Activated naive CD4-positive, alpha-beta T cell treated with anti-CD3 and anti-CD28 coated beads for 36 hours (primary cell): ENCODE measurements at regions of chr17 and their contacts with region 1.

Region 1: GRCh38 chr17:80254396-80255251 is 6.0 kb upstream of the RNF213 start:
- DNase-seq: peak; percentile 90
- H3K4me3 Mint-ChIP-seq: peak overlapping the region; percentile 34
- H3K27ac Mint-ChIP-seq: peak overlapping the region; percentile 92
- H3K4me1 Mint-ChIP-seq: peaks cover 63% of the 10 kb centered on the region
- H3K27me3 Mint-ChIP-seq: no peaks in the 10 kb centered on the region

Region 2: DNA sequence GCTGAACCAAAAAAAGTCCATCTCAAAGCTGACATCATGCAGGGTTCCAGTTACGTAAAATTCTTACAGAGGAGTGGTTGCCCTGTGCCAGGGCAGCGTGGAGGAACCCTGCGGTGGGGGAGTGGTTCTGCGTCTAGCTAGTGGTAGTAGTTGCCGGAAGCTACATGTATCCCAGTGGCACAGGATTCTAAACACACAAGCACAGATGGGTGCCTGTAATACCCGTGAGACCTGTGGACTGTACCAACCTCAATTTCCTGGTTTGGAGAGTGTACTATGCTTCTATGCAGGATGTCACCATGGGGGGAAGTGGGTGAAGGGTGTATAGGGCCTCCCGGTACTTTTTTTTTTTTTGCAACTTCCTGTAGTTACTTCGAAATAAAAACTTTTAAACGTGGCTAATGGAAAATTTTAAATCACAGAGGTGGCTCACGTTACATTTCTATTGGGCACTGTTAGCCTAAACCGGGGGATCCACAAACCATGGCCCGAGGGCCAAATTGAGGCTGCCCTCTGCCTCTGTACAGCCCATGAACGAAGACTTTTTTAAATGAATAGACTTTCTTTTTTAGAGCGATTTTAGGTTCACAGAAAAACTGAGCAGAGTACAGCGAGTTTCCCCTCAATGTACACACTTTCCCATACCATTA is 257.5 kb before region 1 on chr17:
- CTCF ChIA-PET with region 1: no interaction called
- intact Hi-C with region 1: loop called (anchors 2 kb)
- DNase-seq: peak; percentile 92
- H3K4me3 Mint-ChIP-seq: peak overlapping the region; percentile 68
- H3K27ac Mint-ChIP-seq: peak overlapping the region; percentile 97
- H3K4me1 Mint-ChIP-seq: peaks cover 59% of the 10 kb centered on the region
- H3K27me3 Mint-ChIP-seq: no peaks in the 10 kb centered on the region

Region 3: GRCh38 chr17:80101011-80101945 is 153.3 kb before region 1 on chr17 and contains the start of gene GAA:
- CTCF ChIA-PET with region 1: interaction called, 3 read pairs
- intact Hi-C with region 1: loop called (anchors 2 kb)
- DNase-seq: peak; percentile 84
- H3K4me3 Mint-ChIP-seq: peak within 1 kb of the TSS; percentile 92
- H3K27ac Mint-ChIP-seq: peak within 1 kb of the TSS; percentile 59
- H3K4me1 Mint-ChIP-seq: peaks cover 28% of the 10 kb centered on the region
- H3K27me3 Mint-ChIP-seq: no peaks in the 10 kb centered on the region
- total RNA-seq, gene GAA: 32.1 to 33.2 TPM

Region 4: GRCh38 chr17:80195731-80196529 is 58.7 kb before region 1 on chr17:
- CTCF ChIA-PET with region 1: interaction called, 18 read pairs
- intact Hi-C with region 1: loop called (anchors 1 kb)
- DNase-seq: peak; percentile 57
- H3K4me3 Mint-ChIP-seq: no peak overlapping the region
- H3K27ac Mint-ChIP-seq: no peak overlapping the region
- H3K4me1 Mint-ChIP-seq: no peaks in the 10 kb centered on the region
- H3K27me3 Mint-ChIP-seq: no peaks in the 10 kb centered on the region

Region 5: GRCh38 chr17:80791758-80792284 is 537.2 kb after region 1 on chr17:
- CTCF ChIA-PET with region 1: no interaction called
- intact Hi-C with region 1: loop called (anchors 5 kb)
- DNase-seq: peak; percentile 77
- H3K4me3 Mint-ChIP-seq: peak overlapping the region; percentile 58
- H3K27ac Mint-ChIP-seq: peak overlapping the region; percentile 94
- H3K4me1 Mint-ChIP-seq: peaks cover 87% of the 10 kb centered on the region
- H3K27me3 Mint-ChIP-seq: no peaks in the 10 kb centered on the region